ENCODE measurements at regions of chr10 and their contacts with region 1.

Region 1: DNA sequence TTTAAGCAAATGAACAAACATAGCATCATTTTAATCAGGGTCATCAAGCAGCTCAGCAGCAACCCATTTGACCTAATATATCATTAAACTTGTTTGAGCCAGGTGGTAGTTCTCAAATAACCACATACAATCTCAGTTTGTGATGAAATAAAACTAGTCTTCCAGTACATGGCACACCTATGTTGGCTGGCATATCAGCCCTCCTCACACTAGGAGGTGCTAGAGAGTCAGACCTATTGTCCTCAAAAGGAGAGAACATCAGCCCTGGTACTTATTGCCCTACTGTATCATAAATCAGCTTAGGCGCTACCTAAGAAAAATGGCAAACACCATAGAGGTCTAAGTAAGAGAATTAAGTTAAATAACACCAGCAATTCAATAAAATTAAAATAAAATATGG is 81.7 kb downstream of the CABCOCO1 start:
- DNase-seq: peak in 1 of 9 experiments; percentile 3
- ATAC-seq: no peak
- H3K4me3 ChIP-seq: no peak overlapping the region
- H3K4me3 Mint-ChIP-seq: no peak overlapping the region
- H3K27ac ChIP-seq: no peak overlapping the region
- H3K27ac Mint-ChIP-seq: no peak overlapping the region
- H3K4me1 ChIP-seq: no peaks in the 10 kb centered on the region
- H3K4me1 Mint-ChIP-seq: no peaks in the 10 kb centered on the region
- H3K27me3 ChIP-seq: no peaks in the 10 kb centered on the region
- H3K27me3 Mint-ChIP-seq: no peaks in the 10 kb centered on the region
- CTCF ChIP-seq: no peak

Region 2: GRCh38 chr10:61662794-61663259 is 81.6 kb before region 1 on chr10 and contains the start of gene CABCOCO1:
- CTCF ChIA-PET with region 1: no interaction called
- POLR2A ChIA-PET with region 1: no interaction called
- intact Hi-C with region 1: no loop called
- DNase-seq: no peak
- ATAC-seq: no peak
- H3K4me3 ChIP-seq: no peak within 1 kb of the TSS
- H3K4me3 Mint-ChIP-seq: no peak within 1 kb of the TSS
- H3K27ac ChIP-seq: no peak within 1 kb of the TSS
- H3K27ac Mint-ChIP-seq: no peak within 1 kb of the TSS
- H3K4me1 ChIP-seq: no peaks in the 10 kb centered on the region
- H3K4me1 Mint-ChIP-seq: no peaks in the 10 kb centered on the region
- H3K27me3 ChIP-seq: peaks cover 4 to 5% of the 10 kb centered on the region in 2 experiments
- H3K27me3 Mint-ChIP-seq: peaks cover 38% of the 10 kb centered on the region
- CTCF ChIP-seq: no peak
- total RNA-seq, gene CABCOCO1: not detected

Region 3: DNA sequence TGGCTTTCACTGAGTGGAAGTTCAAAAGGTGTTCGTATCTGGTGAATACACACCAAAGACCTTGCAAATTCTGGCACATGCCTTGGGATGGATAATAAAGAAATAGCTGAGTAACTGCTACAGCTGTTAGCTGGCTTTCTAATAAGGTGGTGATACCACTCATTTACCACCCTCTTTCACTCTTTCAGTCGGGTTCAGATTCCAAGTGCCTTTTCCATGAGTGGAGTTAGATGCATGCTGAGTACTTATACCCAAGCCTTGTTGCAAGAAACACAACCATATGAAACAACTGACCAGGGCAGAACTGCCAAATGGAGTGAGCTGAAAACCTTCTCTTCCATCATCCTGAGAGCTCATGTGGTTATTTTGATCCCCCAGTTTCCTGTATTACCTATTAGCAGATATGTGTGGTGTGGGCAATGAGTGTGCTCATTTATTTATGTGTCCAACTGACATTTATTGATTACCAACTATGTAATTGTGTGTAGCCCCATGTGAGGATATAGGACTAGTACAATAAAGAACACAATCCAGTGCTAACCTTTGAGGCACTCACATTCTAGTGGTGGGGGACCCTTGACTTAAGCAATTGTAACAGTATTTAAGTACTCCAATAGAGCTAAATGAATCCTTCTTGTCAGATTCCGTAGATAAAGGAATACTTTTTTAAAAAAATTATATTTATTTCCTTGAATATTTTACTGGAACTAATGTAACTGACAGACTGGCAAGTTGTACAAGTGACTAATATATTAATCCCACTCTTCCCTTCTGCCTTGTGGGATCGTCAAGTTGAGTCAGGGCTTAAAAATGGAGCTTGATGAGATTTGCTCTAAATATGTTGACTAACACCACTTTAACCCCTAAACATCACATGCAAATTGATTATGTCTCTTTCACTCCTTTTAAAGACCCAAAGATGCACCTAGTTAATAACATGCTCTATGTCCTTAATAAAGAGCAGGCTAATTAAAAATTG is 281.7 kb after region 1 on chr10:
- CTCF ChIA-PET with region 1: no interaction called
- POLR2A ChIA-PET with region 1: no interaction called
- intact Hi-C with region 1: loop called in 1 of 2 experiments (anchors 10 kb)
- DNase-seq: no peak
- ATAC-seq: no peak
- H3K4me3 ChIP-seq: no peak overlapping the region
- H3K4me3 Mint-ChIP-seq: no peak overlapping the region
- H3K27ac ChIP-seq: no peak overlapping the region
- H3K27ac Mint-ChIP-seq: no peak overlapping the region
- H3K4me1 ChIP-seq: no peaks in the 10 kb centered on the region
- H3K4me1 Mint-ChIP-seq: peaks cover 43% of the 10 kb centered on the region
- H3K27me3 ChIP-seq: no peaks in the 10 kb centered on the region
- H3K27me3 Mint-ChIP-seq: no peaks in the 10 kb centered on the region
- CTCF ChIP-seq: no peak

Region 4: GRCh38 chr10:62599161-62599560 is 854.7 kb after region 1 on chr10:
- CTCF ChIA-PET with region 1: no interaction called
- POLR2A ChIA-PET with region 1: no interaction called
- intact Hi-C with region 1: no loop called
- DNase-seq: no peak
- ATAC-seq: no peak
- H3K4me3 ChIP-seq: no peak overlapping the region
- H3K4me3 Mint-ChIP-seq: no peak overlapping the region
- H3K27ac ChIP-seq: no peak overlapping the region
- H3K27ac Mint-ChIP-seq: no peak overlapping the region
- H3K4me1 ChIP-seq: no peaks in the 10 kb centered on the region
- H3K4me1 Mint-ChIP-seq: no peaks in the 10 kb centered on the region
- H3K27me3 ChIP-seq: no peaks in the 10 kb centered on the region
- H3K27me3 Mint-ChIP-seq: no peaks in the 10 kb centered on the region
- CTCF ChIP-seq: no peak

Measured in CD8-positive, alpha-beta T cell (primary cell).